ENCODE measurements at regions of chr5 and their contacts with region 1.

Region 1: GRCh38 chr5:66891183-66891925 is 295.2 kb downstream of the MAST4 start:
- DNase-seq: peak in 1 of 2 donors; percentile 60
- ATAC-seq: peak; percentile 35 to 88 (median 77)
- H3K4me3 ChIP-seq: no peak overlapping the region
- H3K27ac ChIP-seq: peak overlapping the region in 7 of 10 donors; percentile 4 to 68 (median 56)
- H3K4me1 ChIP-seq: peaks cover 0 to 53% (median 39%) of the 10 kb centered on the region in 9 donors
- H3K27me3 ChIP-seq: no peaks in the 10 kb centered on the region
- CTCF ChIP-seq: no peak

Region 2: GRCh38 chr5:66223636-66224035 is 667.7 kb before region 1 on chr5:
- intact Hi-C with region 1: no loop called
- DNase-seq: no peak
- ATAC-seq: no peak
- H3K4me3 ChIP-seq: no peak overlapping the region
- H3K27ac ChIP-seq: no peak overlapping the region
- H3K4me1 ChIP-seq: no peaks in the 10 kb centered on the region
- H3K27me3 ChIP-seq: no peaks in the 10 kb centered on the region
- CTCF ChIP-seq: peak in 6 of 9 donors; percentile 16 to 32 (median 28)

Region 3: GRCh38 chr5:66828548-66829357 is 62.6 kb before region 1 on chr5:
- intact Hi-C with region 1: loop called in 1 of 10 experiments (anchors 5 kb)
- DNase-seq: peak; percentile 46 to 73
- ATAC-seq: peak; percentile 91 to 96 (median 95)
- H3K4me3 ChIP-seq: peak overlapping the region; percentile 30 to 59 (median 55)
- H3K27ac ChIP-seq: peak overlapping the region; percentile 31 to 80 (median 72)
- H3K4me1 ChIP-seq: peaks cover 0 to 59% (median 27%) of the 10 kb centered on the region in 9 donors
- H3K27me3 ChIP-seq: peaks cover 0 to 9% (median 0%) of the 10 kb centered on the region in 7 donors
- CTCF ChIP-seq: no peak

Region 4: GRCh38 chr5:66958980-66959641 is 67.8 kb after region 1 on chr5:
- intact Hi-C with region 1: loop called in 1 of 10 experiments (anchors 5 kb)
- DNase-seq: peak; percentile 39 to 49
- ATAC-seq: peak; percentile 47 to 79 (median 70)
- H3K4me3 ChIP-seq: peak overlapping the region; percentile 0 to 56 (median 47)
- H3K27ac ChIP-seq: peak overlapping the region; percentile 16 to 80 (median 64)
- H3K4me1 ChIP-seq: peaks cover 0 to 59% (median 38%) of the 10 kb centered on the region in 9 donors
- H3K27me3 ChIP-seq: no peaks in the 10 kb centered on the region
- CTCF ChIP-seq: no peak

Measured in heart right ventricle (tissue), 16 donors.